Mammary epithelial cell (primary cell): ENCODE measurements at regions of chr6 and their contacts with region 1.

Region 1: DNA sequence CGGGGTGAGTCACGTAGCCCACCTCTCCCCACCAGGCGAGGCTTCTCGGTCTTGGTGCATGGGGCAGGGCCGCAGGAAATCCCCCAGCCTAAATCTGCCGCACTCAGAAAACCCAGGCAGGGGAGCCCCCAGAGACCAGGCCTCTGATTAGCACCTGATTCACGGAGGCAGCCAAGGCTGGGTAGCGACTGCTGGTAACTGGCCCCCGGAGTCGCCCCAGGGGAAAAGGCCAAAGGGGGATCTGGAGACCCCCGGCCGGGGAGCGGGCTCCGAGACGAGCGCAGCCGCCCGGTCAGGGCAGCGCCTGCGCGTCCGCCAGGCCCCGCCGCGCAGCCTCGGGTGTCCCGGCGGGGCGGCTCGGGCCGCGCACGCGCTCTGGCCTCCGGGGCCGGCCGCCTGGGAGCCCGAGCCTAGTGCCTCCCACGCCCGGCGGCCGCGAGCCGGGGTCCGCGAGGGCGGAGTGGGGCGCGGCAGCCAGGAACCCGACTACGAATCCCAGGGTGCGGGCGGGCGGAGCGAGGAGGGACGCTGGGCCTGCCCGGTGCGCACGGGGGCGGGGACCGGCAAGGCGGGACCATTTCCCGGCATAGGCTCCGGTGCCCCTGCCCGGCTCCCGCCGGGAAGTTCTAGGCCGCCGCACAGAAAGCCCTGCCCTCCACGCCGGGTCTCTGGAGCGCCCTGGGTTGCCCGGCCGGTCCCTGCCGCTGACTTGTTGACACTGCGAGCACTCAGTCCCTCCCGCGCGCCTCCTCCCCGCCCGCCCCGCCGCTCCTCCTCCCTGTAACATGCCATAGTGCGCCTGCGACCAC is at the start of gene DUSP22:
- DNase-seq: peak; percentile 91
- H3K4me3 ChIP-seq: peak within 1 kb of the TSS; percentile 77 to 79 (median 78)
- H3K27ac ChIP-seq: peak within 1 kb of the TSS; percentile 91
- H3K4me1 ChIP-seq: peaks cover 17% of the 10 kb centered on the region
- H3K27me3 ChIP-seq: no peaks in the 10 kb centered on the region
- CTCF ChIP-seq: no peak
- total RNA-seq, gene DUSP22: 21.5 to 28.2 TPM

Region 2: DNA sequence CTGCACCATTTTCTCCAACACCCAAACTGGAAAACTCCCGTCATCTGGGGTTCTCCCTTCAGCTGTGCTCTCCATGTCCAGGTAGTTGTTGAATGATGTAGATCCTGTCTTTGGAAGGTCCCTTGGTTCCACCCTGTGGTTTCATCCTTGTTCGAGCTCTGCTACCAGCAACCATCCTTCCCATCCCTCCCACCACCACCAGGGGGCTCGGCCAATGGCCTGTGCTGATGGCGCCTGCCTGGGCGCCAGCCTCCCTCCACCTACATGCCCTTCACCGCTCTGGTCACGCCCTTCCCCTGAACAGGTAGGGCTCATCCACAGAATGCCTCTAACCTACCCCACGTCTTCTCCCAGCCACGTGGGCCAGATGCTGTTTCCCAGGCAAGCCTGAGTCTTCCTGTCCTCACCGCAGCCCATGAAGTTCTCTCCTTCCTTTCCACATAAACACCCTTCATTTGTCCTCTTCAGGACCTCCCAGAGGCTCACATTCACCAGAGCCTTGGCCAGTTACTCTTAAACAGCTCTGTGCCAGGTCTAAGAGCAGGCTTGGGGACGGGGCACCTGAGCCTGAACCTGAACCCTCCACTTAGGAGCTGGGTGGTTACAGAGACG is 74.7 kb before region 1 on chr6:
- CTCF ChIA-PET with region 1: no interaction called
- dilution Hi-C with region 1: no loop called
- in situ Hi-C with region 1: no loop called
- intact Hi-C with region 1: loop called (anchors 5 kb)
- DNase-seq: no peak
- H3K4me3 ChIP-seq: no peak overlapping the region
- H3K27ac ChIP-seq: no peak overlapping the region
- H3K4me1 ChIP-seq: peaks cover 10% of the 10 kb centered on the region
- H3K27me3 ChIP-seq: no peaks in the 10 kb centered on the region
- CTCF ChIP-seq: peak; percentile 32 to 40

Region 3: GRCh38 chr6:333379-334002 is 41.6 kb after region 1 on chr6:
- CTCF ChIA-PET with region 1: no interaction called
- dilution Hi-C with region 1: no loop called
- in situ Hi-C with region 1: no loop called
- intact Hi-C with region 1: loop called (anchors 1 kb)
- DNase-seq: no peak
- H3K4me3 ChIP-seq: no peak overlapping the region
- H3K27ac ChIP-seq: no peak overlapping the region
- H3K4me1 ChIP-seq: no peaks in the 10 kb centered on the region
- H3K27me3 ChIP-seq: no peaks in the 10 kb centered on the region
- CTCF ChIP-seq: no peak

Region 4: DNA sequence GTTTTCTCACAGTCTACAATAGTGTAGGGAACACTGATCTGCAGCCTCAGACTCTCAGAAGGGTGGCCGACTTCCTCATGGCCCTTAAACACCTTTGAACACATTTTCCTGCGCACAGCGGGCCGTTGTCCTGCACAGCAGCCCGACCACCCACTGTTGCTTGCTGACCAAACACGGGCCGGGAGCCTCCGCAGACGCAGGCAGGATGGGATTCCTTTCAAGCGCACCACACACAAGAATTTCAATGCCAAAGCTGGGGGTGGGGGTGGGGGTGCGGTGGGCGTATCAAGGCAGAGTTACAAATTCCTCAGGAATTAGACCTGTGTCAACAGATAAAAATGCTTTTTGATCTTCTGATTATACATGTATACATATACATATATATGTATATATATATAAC is 290.5 kb after region 1 on chr6:
- CTCF ChIA-PET with region 1: no interaction called
- dilution Hi-C with region 1: no loop called
- in situ Hi-C with region 1: no loop called
- intact Hi-C with region 1: loop called (anchors 10 kb)
- DNase-seq: no peak
- H3K4me3 ChIP-seq: no peak overlapping the region
- H3K27ac ChIP-seq: no peak overlapping the region
- H3K4me1 ChIP-seq: peaks cover 17% of the 10 kb centered on the region
- H3K27me3 ChIP-seq: no peaks in the 10 kb centered on the region
- CTCF ChIP-seq: no peak

Region 5: DNA sequence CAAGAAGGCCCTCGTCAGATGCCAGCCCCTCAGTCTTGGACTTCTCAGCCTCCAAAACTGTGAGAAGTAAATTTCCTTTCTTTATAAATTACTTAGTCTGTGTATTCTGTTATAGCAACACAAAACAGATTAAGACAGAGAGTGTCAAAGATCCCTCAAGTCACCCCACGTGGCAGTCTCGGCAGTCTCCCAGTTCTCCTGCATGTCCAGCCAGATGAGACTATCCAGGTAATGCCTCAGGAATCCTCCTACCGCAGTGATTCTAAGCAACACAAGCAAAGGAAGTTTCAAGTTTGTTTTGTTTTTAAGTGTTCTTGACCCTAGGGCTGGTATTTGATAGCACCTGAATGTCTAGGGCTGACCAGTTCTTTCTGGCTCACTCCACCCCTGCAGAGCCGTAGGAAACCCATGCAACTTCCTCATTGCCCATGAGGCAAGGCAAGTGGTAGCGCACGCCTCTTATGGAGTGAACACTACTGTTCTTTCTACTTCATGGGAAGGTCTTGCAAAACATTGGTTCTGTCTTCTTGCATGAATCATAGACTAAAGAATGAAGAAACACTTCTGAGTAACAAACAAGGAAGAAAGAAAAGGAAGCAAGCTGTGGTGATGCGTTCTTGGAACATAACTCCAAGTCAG is 995.2 kb after region 1 on chr6:
- CTCF ChIA-PET with region 1: no interaction called
- dilution Hi-C with region 1: no loop called
- in situ Hi-C with region 1: no loop called
- intact Hi-C with region 1: loop called (anchors 5 kb)
- DNase-seq: peak; percentile 99
- H3K4me3 ChIP-seq: peak overlapping the region in 1 of 3 experiments; percentile 10
- H3K27ac ChIP-seq: peak overlapping the region; percentile 90
- H3K4me1 ChIP-seq: peaks cover 30% of the 10 kb centered on the region
- H3K27me3 ChIP-seq: no peaks in the 10 kb centered on the region
- CTCF ChIP-seq: no peak

Region 6: GRCh38 chr6:1396952-1397868 is 1105.3 kb after region 1 on chr6:
- CTCF ChIA-PET with region 1: no interaction called
- dilution Hi-C with region 1: no loop called
- in situ Hi-C with region 1: no loop called
- intact Hi-C with region 1: loop called (anchors 10 kb)
- DNase-seq: peak; percentile 46
- H3K4me3 ChIP-seq: no peak overlapping the region
- H3K27ac ChIP-seq: no peak overlapping the region
- H3K4me1 ChIP-seq: peaks cover 5% of the 10 kb centered on the region
- H3K27me3 ChIP-seq: peaks cover 23% of the 10 kb centered on the region
- CTCF ChIP-seq: peak; percentile 95 to 98